SK-N-SH (cell line): ENCODE measurements at regions of chr2 and their contacts with region 1.

Region 1: GRCh38 chr2:239106314-239106908 is 258.5 kb downstream of the TWIST2 start:
- DNase-seq: peak; percentile 92
- H3K4me3 ChIP-seq: no peak overlapping the region
- H3K27ac ChIP-seq: no peak overlapping the region; a peak in 1 of 4 replicates
- H3K4me1 ChIP-seq: peaks cover 0 to 27% of the 10 kb centered on the region in 2 experiments; a peak in 1 of 4 replicates
- H3K27me3 ChIP-seq: no peaks in the 10 kb centered on the region
- CTCF ChIP-seq: peak; percentile 62
- EP300 ChIP-seq: no peak
- RAD21 ChIP-seq: peak; percentile 96

Region 2: GRCh38 chr2:238970553-238971081 is 135.8 kb before region 1 on chr2:
- CTCF ChIA-PET with region 1: interaction called, 10 read pairs
- POLR2A ChIA-PET with region 1: no interaction called
- DNase-seq: peak; percentile 88
- H3K4me3 ChIP-seq: peak overlapping the region in 1 of 2 experiments; percentile 35; a peak in 1 of 4 replicates
- H3K27ac ChIP-seq: no peak overlapping the region
- H3K4me1 ChIP-seq: peaks cover 0 to 7% of the 10 kb centered on the region in 2 experiments; a peak in 1 of 4 replicates
- H3K27me3 ChIP-seq: no peaks in the 10 kb centered on the region
- CTCF ChIP-seq: peak; percentile 89
- EP300 ChIP-seq: no peak
- RAD21 ChIP-seq: peak; percentile 68

Region 3: GRCh38 chr2:239025096-239025801 is 81.2 kb before region 1 on chr2:
- CTCF ChIA-PET with region 1: interaction called, 14 read pairs
- POLR2A ChIA-PET with region 1: no interaction called
- DNase-seq: peak; percentile 50
- H3K4me3 ChIP-seq: no peak overlapping the region
- H3K27ac ChIP-seq: no peak overlapping the region; a peak in 1 of 4 replicates
- H3K4me1 ChIP-seq: peaks cover 0 to 33% of the 10 kb centered on the region in 2 experiments; a peak in 3 of 4 replicates
- H3K27me3 ChIP-seq: no peaks in the 10 kb centered on the region
- CTCF ChIP-seq: no peak
- EP300 ChIP-seq: no peak
- RAD21 ChIP-seq: no peak

Region 4: GRCh38 chr2:239061824-239062570 is 44.4 kb before region 1 on chr2:
- CTCF ChIA-PET with region 1: interaction called, 14 read pairs
- POLR2A ChIA-PET with region 1: no interaction called
- DNase-seq: peak; percentile 85
- H3K4me3 ChIP-seq: no peak overlapping the region
- H3K27ac ChIP-seq: peak overlapping the region in 1 of 2 experiments; percentile 71; a peak in 2 of 4 replicates
- H3K4me1 ChIP-seq: peaks cover 0 to 42% of the 10 kb centered on the region in 2 experiments; a peak in 1 of 4 replicates
- H3K27me3 ChIP-seq: no peaks in the 10 kb centered on the region
- CTCF ChIP-seq: no peak
- EP300 ChIP-seq: peak in 1 of 2 experiments; percentile 59; a peak in 1 of 4 replicates
- RAD21 ChIP-seq: no peak

Region 5: DNA sequence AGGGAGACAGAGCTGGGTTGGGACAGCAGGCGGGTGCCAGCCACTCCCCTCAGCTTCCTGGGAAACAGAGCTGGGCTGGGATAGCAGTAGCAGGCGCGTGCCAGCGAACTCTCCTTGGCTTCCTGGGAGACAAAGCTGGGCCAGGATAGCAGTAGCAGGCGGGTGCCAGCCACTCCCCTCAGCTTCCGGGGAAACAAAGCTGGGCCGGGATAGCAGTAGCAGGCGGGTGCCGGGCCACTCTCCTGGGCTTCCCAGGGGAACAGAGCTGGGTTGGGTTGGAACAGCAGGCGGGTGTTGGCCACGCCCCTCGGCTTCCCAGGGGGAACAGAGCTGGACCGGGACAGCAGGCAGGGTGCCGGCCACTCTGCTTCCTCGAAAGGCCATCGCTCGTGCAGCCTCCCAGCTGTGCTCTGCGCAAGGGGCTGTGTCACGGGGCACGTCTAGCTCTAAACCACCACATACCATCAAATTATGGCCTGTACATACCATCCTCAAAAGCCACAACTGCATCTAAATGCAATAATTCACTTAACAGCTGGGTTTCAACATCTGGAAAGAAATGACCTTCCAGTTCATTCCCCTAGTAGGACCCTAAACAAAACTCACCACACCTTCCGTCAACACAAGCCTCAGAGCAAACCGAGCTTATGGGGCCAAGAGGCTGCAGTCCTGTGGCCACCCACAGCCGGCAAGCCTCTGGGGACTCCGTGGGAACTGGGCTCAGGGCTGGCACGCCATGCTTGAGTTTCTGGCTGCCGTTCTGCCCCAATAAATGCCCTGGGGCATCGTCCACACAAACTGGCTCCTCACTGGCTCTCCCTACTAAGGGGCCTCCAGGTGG is 30.3 kb before region 1 on chr2:
- CTCF ChIA-PET with region 1: interaction called, 19 read pairs
- POLR2A ChIA-PET with region 1: no interaction called
- DNase-seq: no peak
- H3K4me3 ChIP-seq: no peak overlapping the region
- H3K27ac ChIP-seq: no peak overlapping the region; a peak in 1 of 4 replicates
- H3K4me1 ChIP-seq: peaks cover 0 to 45% of the 10 kb centered on the region in 2 experiments; a peak in 2 of 4 replicates
- H3K27me3 ChIP-seq: no peaks in the 10 kb centered on the region
- CTCF ChIP-seq: no peak
- EP300 ChIP-seq: no peak
- RAD21 ChIP-seq: no peak

Region 6: DNA sequence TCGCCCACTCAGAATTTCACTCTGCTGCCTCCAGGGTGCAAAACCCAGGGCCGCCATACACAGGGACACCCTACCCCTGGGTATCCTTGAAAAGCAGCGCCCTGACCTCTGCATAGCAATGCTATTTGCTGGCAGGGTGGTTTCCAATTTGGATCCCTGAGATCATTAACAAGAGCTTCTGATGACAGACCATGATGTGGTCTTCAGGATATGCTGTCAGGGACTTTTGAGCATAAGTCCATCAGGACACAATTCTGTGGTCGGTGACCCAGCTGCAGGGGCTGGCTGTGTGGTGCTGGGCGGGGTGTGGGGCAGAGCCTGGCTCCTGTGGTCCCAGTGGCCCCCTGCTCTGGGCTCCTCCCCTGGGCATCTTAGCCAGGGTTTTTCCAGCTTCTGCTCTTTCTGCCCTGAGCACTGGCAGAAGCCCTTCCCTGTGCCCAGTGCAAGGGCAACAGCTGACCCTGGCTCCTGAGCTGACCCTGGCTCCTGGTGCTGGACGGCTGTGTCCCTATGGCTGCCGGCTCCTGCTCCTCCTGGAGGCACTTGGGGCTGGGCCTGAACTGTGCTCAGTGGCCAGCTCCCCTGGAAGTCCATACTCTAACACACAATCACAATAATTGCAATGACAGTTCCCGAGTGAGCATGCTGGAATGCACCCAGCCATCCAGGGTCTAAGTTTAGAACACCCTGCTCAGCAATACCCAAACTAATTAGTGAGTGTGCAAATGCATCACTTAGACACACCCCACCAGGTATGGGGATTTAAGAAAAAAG is 22.9 kb after region 1 on chr2:
- CTCF ChIA-PET with region 1: no interaction called
- POLR2A ChIA-PET with region 1: no interaction called
- DNase-seq: no peak
- H3K4me3 ChIP-seq: no peak overlapping the region
- H3K27ac ChIP-seq: no peak overlapping the region
- H3K4me1 ChIP-seq: no peaks in the 10 kb centered on the region
- H3K27me3 ChIP-seq: no peaks in the 10 kb centered on the region
- CTCF ChIP-seq: no peak
- EP300 ChIP-seq: no peak
- RAD21 ChIP-seq: no peak

Region 7: DNA sequence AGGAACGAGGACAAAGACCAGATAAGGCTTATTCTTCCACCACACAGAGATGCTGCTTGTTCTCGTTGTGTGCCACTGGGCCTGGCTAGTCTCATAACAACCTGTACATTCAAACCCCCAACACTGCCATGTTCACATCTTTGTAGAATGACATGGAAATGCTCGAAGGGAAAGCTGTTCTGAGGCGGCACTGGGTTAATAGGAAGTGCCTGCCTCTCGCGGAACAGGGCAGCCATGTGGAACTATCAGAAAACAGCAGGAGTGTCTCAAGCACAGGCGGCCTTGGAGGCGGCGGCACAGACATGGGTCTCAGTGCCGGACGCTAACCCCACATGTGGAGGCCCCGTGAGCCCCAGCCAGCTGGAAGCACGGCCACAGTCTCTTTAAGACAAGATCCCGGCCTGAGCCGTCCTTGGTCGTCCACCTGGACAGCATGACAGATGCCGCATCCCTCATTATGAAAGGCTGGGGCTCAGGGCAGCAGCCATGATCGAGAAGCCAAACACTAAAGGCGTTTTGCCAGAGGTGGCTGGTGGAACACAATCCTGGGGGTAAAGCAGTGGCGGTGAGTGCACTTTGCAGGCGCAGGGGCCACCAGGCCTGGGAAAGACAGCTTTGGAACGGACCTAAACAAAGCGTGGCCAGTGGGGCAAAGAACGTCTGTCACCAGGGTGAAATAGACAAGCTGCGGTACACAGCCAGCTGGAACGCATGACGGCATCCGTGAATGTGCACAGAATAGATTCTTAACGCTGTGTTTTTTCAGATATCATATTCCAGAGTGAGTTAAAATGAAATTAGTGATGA is 133.4 kb after region 1 on chr2:
- CTCF ChIA-PET with region 1: no interaction called
- POLR2A ChIA-PET with region 1: no interaction called
- DNase-seq: peak; percentile 76
- H3K4me3 ChIP-seq: no peak overlapping the region; a peak in 1 of 4 replicates
- H3K27ac ChIP-seq: peak overlapping the region; percentile 24 to 99; a peak in 3 of 4 replicates
- H3K4me1 ChIP-seq: peaks cover 0 to 52% of the 10 kb centered on the region in 2 experiments; a peak in 2 of 4 replicates
- H3K27me3 ChIP-seq: no peaks in the 10 kb centered on the region
- CTCF ChIP-seq: no peak
- EP300 ChIP-seq: no peak
- RAD21 ChIP-seq: peak; percentile 21; the same call in 1 of the 2 replicates